ENCODE measurements at regions of chr17 and their contacts with region 1.

Region 1: GRCh38 chr17:51153210-51154072 is at the start of gene NME1:
- DNase-seq: peak; percentile 100
- ATAC-seq: peak; percentile 94
- H3K4me3 ChIP-seq: peak within 1 kb of the TSS; percentile 81 to 94 (median 84)
- H3K27ac ChIP-seq: peak within 1 kb of the TSS; percentile 76
- H3K4me1 ChIP-seq: peaks cover 49% of the 10 kb centered on the region
- H3K27me3 ChIP-seq: no peaks in the 10 kb centered on the region; a peak in 1 of 5 replicates
- CTCF ChIP-seq: peak; percentile 98
- EP300 ChIP-seq: peak; percentile 78 to 84
- POLR2A ChIP-seq: peak; percentile 70 to 92
- RAD21 ChIP-seq: peak; percentile 95
- total RNA-seq, gene NME1: 516 and 689 TPM in 2 replicates

Region 2: DNA sequence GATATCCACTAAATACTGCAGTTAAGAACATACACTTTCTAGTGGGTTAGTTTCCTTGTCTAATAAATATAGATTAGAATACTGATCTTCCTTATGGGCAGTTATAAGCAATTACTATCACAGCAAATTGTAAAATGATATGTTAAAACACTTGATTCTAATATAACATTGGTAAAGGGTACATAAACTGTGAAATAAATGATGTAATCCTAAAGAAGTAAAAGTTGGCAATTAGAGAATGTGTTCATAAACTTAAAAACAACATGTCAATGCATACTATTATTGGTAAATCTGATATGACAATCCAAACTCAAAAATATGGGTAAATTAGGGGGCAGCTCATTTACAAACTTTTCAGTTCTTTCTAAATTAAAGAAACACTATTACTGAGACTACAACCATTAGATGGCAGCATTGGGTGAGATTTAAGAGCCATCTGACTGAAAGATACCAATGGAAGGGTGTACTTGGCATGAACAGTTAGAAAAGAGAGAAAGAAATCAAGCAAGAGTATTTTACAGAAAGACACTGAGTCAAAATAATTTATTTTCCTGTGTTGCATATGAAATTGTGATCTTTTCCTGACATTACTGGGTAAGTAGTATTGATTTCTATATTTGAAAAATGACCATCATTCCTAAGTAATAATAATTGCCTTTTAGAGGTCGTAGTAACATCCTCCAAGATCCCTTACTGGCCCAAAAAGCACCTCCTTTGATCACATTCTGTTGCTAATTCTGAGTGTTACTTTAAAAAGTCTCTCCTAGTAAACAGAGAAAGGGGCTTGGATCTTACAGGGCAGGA is 152.4 kb before region 1 on chr17:
- CTCF ChIA-PET with region 1: interaction called, 38 read pairs
- POLR2A ChIA-PET with region 1: interaction called, 7 read pairs
- in situ Hi-C with region 1: loop called (anchors 5 kb)
- intact Hi-C with region 1: loop called (anchors 1 kb)
- DNase-seq: peak; percentile 71
- ATAC-seq: peak; percentile 79
- H3K4me3 ChIP-seq: no peak overlapping the region
- H3K27ac ChIP-seq: no peak overlapping the region
- H3K4me1 ChIP-seq: peaks cover 11% of the 10 kb centered on the region
- H3K27me3 ChIP-seq: no peaks in the 10 kb centered on the region
- CTCF ChIP-seq: peak; percentile 67
- EP300 ChIP-seq: no peak
- POLR2A ChIP-seq: no peak
- RAD21 ChIP-seq: no peak; the same call in 1 of the 2 replicates

Region 3: DNA sequence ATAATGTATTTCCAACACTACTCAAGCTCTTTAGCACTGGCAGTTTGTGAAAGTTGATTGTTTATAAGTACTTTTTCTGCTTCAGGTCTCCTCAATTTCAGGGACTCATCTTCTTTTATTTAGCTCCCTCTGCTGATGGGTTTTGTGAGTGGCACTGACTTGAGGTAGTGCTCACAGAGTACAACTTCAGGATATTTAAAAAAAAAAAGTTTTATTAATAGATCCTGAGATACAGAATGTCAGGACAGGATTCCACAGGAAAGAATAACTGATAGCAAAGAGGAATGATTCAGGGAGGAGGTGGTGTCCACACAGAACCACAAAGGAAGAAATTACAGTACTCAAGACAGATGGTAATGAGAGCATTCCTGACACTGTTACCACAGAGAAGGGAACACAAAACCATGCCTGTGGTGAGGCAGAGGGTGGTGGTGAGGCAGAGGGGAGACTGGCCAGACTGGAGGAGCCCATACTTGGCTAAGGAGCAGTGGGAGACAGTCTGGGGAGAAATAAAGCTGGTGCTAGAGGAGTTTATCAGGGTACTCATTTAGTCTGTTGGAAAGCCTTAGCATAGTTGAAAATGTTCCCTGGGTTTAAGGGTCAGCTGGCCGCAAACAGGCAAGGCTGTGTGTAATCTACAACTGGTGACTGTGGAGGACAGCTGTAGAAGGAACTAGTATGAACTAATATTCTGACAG is 96.5 kb before region 1 on chr17:
- CTCF ChIA-PET with region 1: interaction called, 7 read pairs
- POLR2A ChIA-PET with region 1: interaction called, 5 read pairs
- in situ Hi-C with region 1: no loop called
- intact Hi-C with region 1: loop called (anchors 1 kb)
- DNase-seq: peak; percentile 68
- ATAC-seq: peak; percentile 98
- H3K4me3 ChIP-seq: peak overlapping the region in 1 of 3 experiments; percentile 32; a peak in 1 of 6 replicates
- H3K27ac ChIP-seq: peak overlapping the region; percentile 64
- H3K4me1 ChIP-seq: peaks cover 22% of the 10 kb centered on the region
- H3K27me3 ChIP-seq: no peaks in the 10 kb centered on the region
- CTCF ChIP-seq: peak; percentile 69
- EP300 ChIP-seq: no peak
- POLR2A ChIP-seq: no peak
- RAD21 ChIP-seq: no peak

Region 4: DNA sequence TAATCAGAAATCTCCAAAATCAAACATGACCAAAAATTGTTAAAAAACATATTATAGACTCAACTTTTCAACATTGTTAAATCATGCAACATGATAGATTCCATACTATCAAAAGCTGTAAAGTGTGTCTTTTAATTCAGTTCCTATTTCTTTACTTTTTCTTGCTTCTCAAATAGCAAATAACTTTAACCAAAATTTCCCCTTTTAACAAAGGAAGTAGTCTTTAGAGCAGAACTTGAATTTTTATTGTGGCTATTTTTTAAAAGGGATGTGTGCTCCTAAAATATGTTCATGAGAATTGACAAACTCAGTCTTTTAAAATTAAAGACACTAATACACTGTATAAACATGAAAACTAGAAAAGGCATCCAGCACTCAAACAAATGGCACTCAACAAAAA is 81.9 kb before region 1 on chr17:
- CTCF ChIA-PET with region 1: no interaction called
- POLR2A ChIA-PET with region 1: no interaction called
- in situ Hi-C with region 1: no loop called
- intact Hi-C with region 1: no loop called
- DNase-seq: no peak
- ATAC-seq: no peak
- H3K4me3 ChIP-seq: no peak overlapping the region
- H3K27ac ChIP-seq: no peak overlapping the region
- H3K4me1 ChIP-seq: no peaks in the 10 kb centered on the region; the same call in 1 of the 2 replicates
- H3K27me3 ChIP-seq: no peaks in the 10 kb centered on the region
- CTCF ChIP-seq: no peak
- EP300 ChIP-seq: no peak
- POLR2A ChIP-seq: no peak
- RAD21 ChIP-seq: no peak

Region 5: GRCh38 chr17:51103451-51103850 is 50.0 kb before region 1 on chr17:
- CTCF ChIA-PET with region 1: no interaction called
- POLR2A ChIA-PET with region 1: no interaction called
- in situ Hi-C with region 1: no loop called
- intact Hi-C with region 1: no loop called
- DNase-seq: no peak
- ATAC-seq: peak; percentile 15; the same call in 1 of the 3 replicates
- H3K4me3 ChIP-seq: no peak overlapping the region
- H3K27ac ChIP-seq: peak overlapping the region; percentile 11
- H3K4me1 ChIP-seq: peaks cover 70% of the 10 kb centered on the region
- H3K27me3 ChIP-seq: no peaks in the 10 kb centered on the region
- CTCF ChIP-seq: no peak
- EP300 ChIP-seq: no peak
- POLR2A ChIP-seq: no peak
- RAD21 ChIP-seq: no peak

Region 6: GRCh38 chr17:51120739-51121617 is 32.5 kb before region 1 on chr17 and contains the start of gene SPAG9:
- CTCF ChIA-PET with region 1: interaction called, 14 read pairs
- POLR2A ChIA-PET with region 1: interaction called, 13 read pairs
- in situ Hi-C with region 1: no loop called
- intact Hi-C with region 1: loop called (anchors 1 kb)
- DNase-seq: peak; percentile 90
- ATAC-seq: peak; percentile 73
- H3K4me3 ChIP-seq: peak within 1 kb of the TSS; percentile 81 to 100 (median 97)
- H3K27ac ChIP-seq: peak within 1 kb of the TSS; percentile 90
- H3K4me1 ChIP-seq: peaks cover 65% of the 10 kb centered on the region
- H3K27me3 ChIP-seq: peaks cover 0 to 3% of the 10 kb centered on the region in 2 experiments; a peak in 1 of 5 replicates
- CTCF ChIP-seq: no peak
- EP300 ChIP-seq: peak in 1 of 2 experiments; percentile 68; a peak in 1 of 4 replicates
- POLR2A ChIP-seq: peak; percentile 65 to 83; a peak in 3 of 4 replicates
- RAD21 ChIP-seq: no peak
- total RNA-seq, gene SPAG9: 78.6 and 84.0 TPM in 2 replicates

Region 7: GRCh38 chr17:51166197-51166986 is 13.0 kb after region 1 on chr17 and contains the start of gene NME2:
- CTCF ChIA-PET with region 1: no interaction called
- POLR2A ChIA-PET with region 1: interaction called, 43 read pairs
- in situ Hi-C with region 1: no loop called
- intact Hi-C with region 1: no loop called
- DNase-seq: peak; percentile 89
- ATAC-seq: peak; percentile 91
- H3K4me3 ChIP-seq: peak within 1 kb of the TSS; percentile 70 to 96 (median 88)
- H3K27ac ChIP-seq: peak within 1 kb of the TSS; percentile 80
- H3K4me1 ChIP-seq: peaks cover 32% of the 10 kb centered on the region
- H3K27me3 ChIP-seq: no peaks in the 10 kb centered on the region
- CTCF ChIP-seq: peak; percentile 50
- EP300 ChIP-seq: no peak
- POLR2A ChIP-seq: peak; percentile 90 to 93
- RAD21 ChIP-seq: peak; percentile 42; the same call in 1 of the 2 replicates
- total RNA-seq, gene NME2: 1,213 and 1,462 TPM in 2 replicates

Measured in HepG2 (cell line).